Pancreas (tissue), 10 donors: ENCODE measurements at regions of chr1 and their contacts with region 1.

Region 1: DNA sequence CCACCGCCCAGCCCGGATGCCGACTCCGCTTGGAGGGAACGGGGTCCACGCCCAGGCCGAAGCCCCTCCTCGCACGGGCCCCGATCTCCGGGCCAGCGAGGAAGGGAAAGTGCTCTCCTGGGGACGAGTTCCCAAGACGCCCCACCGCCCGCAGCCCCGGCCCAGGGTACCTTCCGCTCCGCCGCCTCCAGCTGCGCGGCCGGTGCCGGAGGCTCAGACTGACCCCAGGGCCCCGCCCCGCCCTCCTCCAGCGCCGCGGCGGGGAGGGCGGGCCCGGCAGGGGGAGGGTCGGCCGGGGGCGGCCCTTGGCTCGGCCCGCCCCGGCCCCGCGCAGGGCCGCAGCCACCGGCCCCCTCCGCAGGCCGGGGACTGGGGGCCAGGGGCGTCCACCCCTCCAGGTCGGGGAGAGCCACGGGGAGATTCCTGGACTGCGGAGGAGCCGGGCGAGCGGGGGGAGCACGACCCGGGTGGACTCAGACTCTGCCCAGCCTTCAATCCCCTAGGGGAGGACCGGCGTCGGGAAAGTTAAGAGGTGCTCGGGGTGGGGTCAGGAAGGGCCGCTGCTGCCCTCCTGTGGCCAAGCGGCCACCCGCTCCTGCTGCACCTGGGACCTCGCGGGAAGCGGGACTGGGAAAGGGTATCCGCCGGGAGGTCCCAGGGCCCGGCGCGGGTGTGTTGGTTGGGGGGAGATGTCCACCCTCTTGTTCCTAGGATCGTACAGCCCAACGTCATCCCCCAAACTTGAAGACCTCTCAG is at the start of gene RHOC:
- DNase-seq: peak; percentile 87 to 94 (median 90)
- ATAC-seq: peak; percentile 81 to 87 (median 84)
- H3K4me3 ChIP-seq: peak within 1 kb of the TSS; percentile 63 to 99 (median 94)
- H3K27ac ChIP-seq: peak within 1 kb of the TSS; percentile 77 to 92 (median 84)
- H3K4me1 ChIP-seq: peaks cover 0 to 27% (median 8%) of the 10 kb centered on the region in 3 donors
- H3K27me3 ChIP-seq: no peaks in the 10 kb centered on the region
- CTCF ChIP-seq: peak; percentile 86 to 89 (median 88)
- total RNA-seq, gene RHOC: 44.0 to 105 (median 53.5) TPM

Region 2: DNA sequence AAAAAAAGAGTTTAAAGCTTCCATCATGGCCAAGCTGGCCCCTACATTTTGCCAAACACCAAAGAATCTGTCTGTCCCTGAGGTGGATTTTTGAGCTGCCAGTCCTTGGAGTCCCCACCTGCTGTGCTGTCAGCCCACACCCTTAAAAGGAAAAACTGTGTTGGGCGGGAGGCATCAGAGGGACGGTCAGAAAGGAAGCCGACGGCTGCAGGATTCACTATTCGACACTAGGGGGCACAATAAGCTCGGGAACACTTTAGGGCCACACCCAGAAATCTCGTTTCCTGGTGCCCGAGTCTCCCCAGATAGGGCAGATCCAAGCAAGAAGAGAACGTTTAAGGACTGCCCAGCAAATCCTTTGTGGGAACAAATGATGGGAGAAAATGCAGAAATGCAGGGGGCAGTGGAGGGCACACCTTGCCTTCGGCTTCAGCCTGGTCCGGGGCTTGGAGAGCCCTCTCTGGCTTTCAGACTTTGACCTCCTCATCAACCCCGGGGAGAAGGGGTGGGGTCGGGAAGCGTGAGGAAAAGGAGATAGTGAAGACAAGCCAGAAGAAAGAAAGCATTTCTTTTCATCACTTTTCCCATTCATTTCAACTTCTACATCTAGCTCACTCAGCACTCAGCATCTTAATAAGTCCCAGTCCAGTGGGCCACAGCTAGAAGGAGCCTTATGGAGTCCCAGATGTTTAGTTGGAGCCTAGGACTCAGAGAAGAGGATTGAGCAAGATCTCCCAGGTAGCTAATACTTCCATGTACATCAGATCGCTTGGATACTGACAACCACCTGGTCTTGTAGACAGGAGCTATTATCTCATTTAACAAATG is 316.1 kb before region 1 on chr1:
- intact Hi-C with region 1: loop called in 1 of 3 experiments (anchors 5 kb)
- DNase-seq: peak; percentile 83 to 93 (median 86)
- ATAC-seq: peak; percentile 89 to 94 (median 92)
- H3K4me3 ChIP-seq: peak overlapping the region in 3 of 4 donors; percentile 11 to 38 (median 37)
- H3K27ac ChIP-seq: peak overlapping the region in 3 of 4 donors; percentile 32 to 52 (median 45)
- H3K4me1 ChIP-seq: peaks cover 0 to 21% (median 7%) of the 10 kb centered on the region in 3 donors
- H3K27me3 ChIP-seq: no peaks in the 10 kb centered on the region
- CTCF ChIP-seq: peak; percentile 85 to 90 (median 86)

Region 3: GRCh38 chr1:112501810-112502641 is 205.1 kb before region 1 on chr1:
- intact Hi-C with region 1: loop called in 2 of 3 experiments (anchors 5 to 10 kb)
- DNase-seq: peak; percentile 46 to 87 (median 68)
- ATAC-seq: peak; percentile 85 to 96 (median 91)
- H3K4me3 ChIP-seq: peak overlapping the region; percentile 9 to 57 (median 36)
- H3K27ac ChIP-seq: no peak overlapping the region
- H3K4me1 ChIP-seq: no peaks in the 10 kb centered on the region
- H3K27me3 ChIP-seq: no peaks in the 10 kb centered on the region
- CTCF ChIP-seq: peak; percentile 16 to 46 (median 40)

Region 4: GRCh38 chr1:112508278-112509004 is 198.6 kb before region 1 on chr1 and contains the start of gene WNT2B:
- intact Hi-C with region 1: loop called in 2 of 3 experiments (anchors 5 to 10 kb)
- DNase-seq: peak in 5 of 6 donors; percentile 24 to 72 (median 47)
- ATAC-seq: peak; percentile 61 to 80 (median 74)
- H3K4me3 ChIP-seq: peak within 1 kb of the TSS; percentile 31 to 65 (median 44)
- H3K27ac ChIP-seq: no peak within 1 kb of the TSS
- H3K4me1 ChIP-seq: peaks cover 0 to 8% (median 5%) of the 10 kb centered on the region in 3 donors
- H3K27me3 ChIP-seq: no peaks in the 10 kb centered on the region
- CTCF ChIP-seq: no peak
- total RNA-seq, gene WNT2B: 0.79 to 2.7 (median 1.6) TPM

Region 5: GRCh38 chr1:112619520-112620376 is 87.3 kb before region 1 on chr1 and contains the start of gene CAPZA1:
- intact Hi-C with region 1: loop called in 1 of 3 experiments (anchors 10 kb)
- DNase-seq: peak; percentile 86 to 94 (median 90)
- ATAC-seq: peak; percentile 94 to 98 (median 96)
- H3K4me3 ChIP-seq: peak within 1 kb of the TSS; percentile 76 to 91 (median 84)
- H3K27ac ChIP-seq: peak within 1 kb of the TSS; percentile 89 to 94 (median 90)
- H3K4me1 ChIP-seq: peaks cover 13 to 28% (median 13%) of the 10 kb centered on the region in 3 donors
- H3K27me3 ChIP-seq: no peaks in the 10 kb centered on the region
- CTCF ChIP-seq: no peak
- total RNA-seq, gene CAPZA1: 27.2 to 60.5 (median 34.7) TPM

Region 6: DNA sequence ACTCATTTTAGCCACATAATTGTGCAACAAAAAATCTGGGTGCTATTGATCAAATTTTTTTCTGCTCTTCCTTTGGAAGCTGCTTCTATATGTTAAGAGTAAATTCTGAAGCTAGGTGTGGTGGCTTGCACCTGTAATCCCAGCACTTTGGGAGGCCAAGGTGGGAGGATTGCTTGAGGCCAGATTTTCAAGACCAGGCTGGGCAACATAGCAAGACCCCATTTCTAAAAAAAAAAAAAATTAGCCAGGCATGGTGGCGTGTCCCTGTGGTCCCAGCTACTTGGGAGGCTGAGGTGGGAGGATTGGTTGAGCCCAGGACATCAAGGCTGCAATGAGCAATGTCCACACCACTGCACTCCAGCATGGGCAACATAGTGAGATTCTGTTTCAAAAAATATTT is 1129.5 kb after region 1 on chr1:
- intact Hi-C with region 1: no loop called
- DNase-seq: no peak
- ATAC-seq: no peak
- H3K4me3 ChIP-seq: no peak overlapping the region
- H3K27ac ChIP-seq: no peak overlapping the region
- H3K4me1 ChIP-seq: no peaks in the 10 kb centered on the region
- H3K27me3 ChIP-seq: no peaks in the 10 kb centered on the region
- CTCF ChIP-seq: no peak